Aorta (tissue), 5 donors: ENCODE measurements at regions of chr10 and their contacts with region 1.

Region 1: GRCh38 chr10:131514454-131514853 is 202.9 kb upstream of the TCERG1L start:
- DNase-seq: no peak
- ATAC-seq: no peak
- H3K4me3 ChIP-seq: no peak overlapping the region
- H3K27ac ChIP-seq: no peak overlapping the region
- H3K4me1 ChIP-seq: no peaks in the 10 kb centered on the region
- H3K27me3 ChIP-seq: no peaks in the 10 kb centered on the region

Region 2: DNA sequence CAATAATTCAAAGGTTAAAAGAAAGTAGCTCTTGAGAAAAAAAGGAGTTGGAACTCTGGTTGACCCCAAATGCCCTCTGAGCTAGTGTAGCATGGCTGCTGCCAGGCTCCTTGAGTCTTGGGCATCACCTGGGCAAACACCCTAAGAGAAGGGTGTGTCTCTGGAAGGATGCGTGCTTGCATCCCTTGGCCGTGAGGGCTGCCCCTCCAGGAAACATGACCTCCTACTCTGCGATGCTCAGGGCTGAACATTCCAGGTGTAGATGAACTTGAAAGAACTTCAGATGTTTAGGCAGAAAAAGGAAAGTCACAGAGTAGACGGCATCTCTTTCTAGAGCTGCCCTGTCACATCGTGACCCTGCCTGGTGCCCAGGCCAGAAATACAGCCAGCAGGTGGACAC is 13.6 kb before region 1 on chr10:
- intact Hi-C with region 1: loop called in 1 of 2 experiments (anchors 1 kb)
- DNase-seq: no peak
- ATAC-seq: no peak
- H3K4me3 ChIP-seq: no peak overlapping the region
- H3K27ac ChIP-seq: no peak overlapping the region
- H3K4me1 ChIP-seq: no peaks in the 10 kb centered on the region
- H3K27me3 ChIP-seq: no peaks in the 10 kb centered on the region

Region 3: GRCh38 chr10:132347211-132347930 is 832.9 kb after region 1 on chr10:
- intact Hi-C with region 1: no loop called
- DNase-seq: peak; percentile 30 to 64
- ATAC-seq: no peak
- H3K4me3 ChIP-seq: no peak overlapping the region
- H3K27ac ChIP-seq: no peak overlapping the region
- H3K4me1 ChIP-seq: no peaks in the 10 kb centered on the region
- H3K27me3 ChIP-seq: no peaks in the 10 kb centered on the region